ENCODE measurements at regions of chr11 and their contacts with region 1.

Region 1: GRCh38 chr11:8964324-8965320 is at the start of gene TMEM9B:
- DNase-seq: peak; percentile 84
- ATAC-seq: peak; percentile 82
- H3K4me3 Mint-ChIP-seq: peak within 1 kb of the TSS; percentile 96
- H3K27ac Mint-ChIP-seq: peak within 1 kb of the TSS; percentile 92
- H3K4me1 Mint-ChIP-seq: peaks cover 35% of the 10 kb centered on the region
- H3K27me3 Mint-ChIP-seq: no peaks in the 10 kb centered on the region
- CTCF ChIP-seq: no peak
- total RNA-seq, gene TMEM9B: 29.0 and 29.6 TPM in 2 replicates

Region 2: DNA sequence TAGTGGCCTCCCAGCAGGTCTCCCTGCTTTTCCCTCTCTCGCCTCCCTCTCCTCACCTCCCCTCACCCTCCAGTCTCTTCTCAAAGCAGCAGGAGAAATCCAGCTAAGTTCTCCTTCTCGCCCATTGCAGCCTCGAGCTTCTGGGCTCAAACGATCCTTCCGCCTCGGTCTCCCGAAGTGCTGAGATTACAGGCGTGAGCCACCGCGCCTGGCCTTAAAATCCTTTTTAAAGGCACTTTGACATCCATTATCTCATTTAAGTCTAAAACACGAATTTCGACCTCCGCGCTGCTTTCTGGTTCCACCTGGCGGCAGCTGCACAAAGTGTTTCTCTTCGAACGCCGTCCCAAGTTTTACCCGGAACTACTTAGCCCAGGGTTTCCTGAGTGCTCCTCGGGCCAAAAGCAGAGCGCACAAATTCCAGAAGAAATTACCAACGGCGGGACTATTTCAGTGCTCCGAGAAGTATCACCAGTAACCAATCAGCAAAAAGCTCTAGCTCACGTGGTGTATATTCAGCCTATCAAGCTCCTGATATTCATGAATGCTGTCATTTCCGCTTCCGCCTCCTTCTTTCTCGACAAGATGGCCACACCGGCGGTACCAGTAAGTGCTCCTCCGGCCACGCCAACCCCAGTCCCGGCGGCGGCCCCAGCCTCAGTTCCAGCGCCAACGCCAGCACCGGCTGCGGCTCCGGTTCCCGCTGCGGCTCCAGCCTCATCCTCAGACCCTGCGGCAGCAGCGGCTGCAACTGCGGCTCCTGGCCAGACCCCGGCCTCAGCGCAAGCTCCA is 977.7 kb before region 1 on chr11 and contains the start of gene EIF3F:
- CTCF ChIA-PET with region 1: no interaction called
- POLR2A ChIA-PET with region 1: no interaction called
- intact Hi-C with region 1: loop called (anchors 1 kb)
- DNase-seq: peak; percentile 73
- ATAC-seq: peak; percentile 97
- H3K4me3 Mint-ChIP-seq: peak within 1 kb of the TSS; percentile 93
- H3K27ac Mint-ChIP-seq: peak within 1 kb of the TSS; percentile 94
- H3K4me1 Mint-ChIP-seq: peaks cover 40% of the 10 kb centered on the region
- H3K27me3 Mint-ChIP-seq: no peaks in the 10 kb centered on the region
- CTCF ChIP-seq: peak; percentile 56
- total RNA-seq, gene EIF3F: 367 and 396 TPM in 2 replicates

Region 3: DNA sequence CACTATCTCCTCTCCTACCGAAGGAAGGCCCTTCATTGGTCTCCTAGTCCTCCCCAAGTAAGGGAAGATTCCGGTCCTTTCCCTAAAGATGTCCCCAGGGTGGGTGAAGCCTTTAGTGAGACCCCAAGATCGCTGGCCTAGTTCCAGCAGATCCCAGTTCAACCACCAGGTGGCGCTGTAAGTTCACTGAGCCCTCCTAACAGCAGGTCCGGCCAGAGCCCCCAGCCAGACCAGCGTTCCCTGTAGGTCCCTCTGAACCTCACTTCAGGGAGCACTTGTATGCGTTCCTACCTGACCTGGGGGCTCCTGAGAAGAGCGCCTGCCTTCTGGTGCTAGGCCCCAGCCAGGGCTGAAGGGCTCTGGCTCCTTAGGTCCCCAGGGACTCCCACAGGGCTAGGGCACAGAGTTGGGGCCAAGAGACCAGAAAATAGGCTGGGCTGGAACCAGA is 739.0 kb before region 1 on chr11:
- CTCF ChIA-PET with region 1: interaction called, 3 read pairs
- POLR2A ChIA-PET with region 1: no interaction called
- intact Hi-C with region 1: loop called (anchors 1 kb)
- DNase-seq: peak; percentile 67
- ATAC-seq: peak; percentile 79
- H3K4me3 Mint-ChIP-seq: no peak overlapping the region
- H3K27ac Mint-ChIP-seq: no peak overlapping the region
- H3K4me1 Mint-ChIP-seq: no peaks in the 10 kb centered on the region
- H3K27me3 Mint-ChIP-seq: peaks cover 3% of the 10 kb centered on the region
- CTCF ChIP-seq: no peak

Region 4: GRCh38 chr11:8566613-8567210 is 397.9 kb before region 1 on chr11:
- CTCF ChIA-PET with region 1: interaction called, 11 read pairs
- POLR2A ChIA-PET with region 1: interaction called, 3 read pairs
- intact Hi-C with region 1: no loop called
- DNase-seq: no peak
- ATAC-seq: peak; percentile 45
- H3K4me3 Mint-ChIP-seq: no peak overlapping the region
- H3K27ac Mint-ChIP-seq: no peak overlapping the region
- H3K4me1 Mint-ChIP-seq: no peaks in the 10 kb centered on the region
- H3K27me3 Mint-ChIP-seq: peaks cover 1% of the 10 kb centered on the region
- CTCF ChIP-seq: no peak

Region 5: DNA sequence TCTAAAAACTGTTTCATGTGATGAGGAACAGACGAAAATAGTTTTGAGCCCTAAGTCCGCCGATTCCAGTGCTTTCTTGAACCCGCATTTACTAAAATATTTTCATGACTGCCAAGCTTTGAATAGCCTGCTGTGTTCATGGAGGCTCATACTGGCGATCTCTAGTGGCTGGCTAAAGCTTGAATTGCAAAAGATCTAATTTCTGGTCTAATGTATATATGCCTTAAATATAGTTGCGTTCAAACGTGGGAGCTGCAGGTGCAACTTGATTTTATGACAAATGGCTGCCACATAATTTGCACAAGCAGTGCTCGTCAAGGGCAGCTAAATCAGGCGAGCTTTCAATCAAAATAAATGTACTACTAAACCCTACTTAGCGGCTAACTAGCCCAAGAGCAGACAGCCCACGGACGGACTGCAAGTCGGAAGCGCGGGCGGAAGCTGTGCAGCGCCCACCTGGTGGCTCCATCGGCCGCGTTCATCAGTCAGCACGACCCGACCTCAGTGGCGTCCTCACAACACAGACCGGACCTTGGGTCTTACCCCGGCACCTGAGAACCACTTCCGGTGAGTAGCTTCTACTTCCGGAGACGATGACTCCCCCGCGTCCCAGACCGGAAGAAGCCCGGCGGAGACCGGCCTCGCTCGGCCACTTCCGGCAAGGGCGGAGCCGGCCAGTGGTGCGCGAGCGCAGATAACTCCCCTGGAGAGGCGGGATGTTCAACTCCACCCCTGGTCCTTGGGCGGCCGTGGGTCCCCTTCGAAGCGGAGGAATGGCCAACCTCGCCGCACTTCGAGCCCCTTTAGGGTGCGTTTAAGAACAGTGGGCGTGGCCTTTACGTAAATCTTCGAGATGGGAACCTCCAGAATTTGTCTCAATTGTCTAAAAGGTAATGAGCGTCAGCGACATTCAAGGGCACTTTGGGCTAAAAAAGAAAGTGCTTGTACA is 275.9 kb before region 1 on chr11:
- CTCF ChIA-PET with region 1: interaction called, 6 read pairs
- POLR2A ChIA-PET with region 1: interaction called, 20 read pairs
- intact Hi-C with region 1: no loop called
- DNase-seq: peak; percentile 84
- ATAC-seq: peak; percentile 90
- H3K4me3 Mint-ChIP-seq: peak overlapping the region; percentile 97
- H3K27ac Mint-ChIP-seq: peak overlapping the region; percentile 95
- H3K4me1 Mint-ChIP-seq: peaks cover 49% of the 10 kb centered on the region
- H3K27me3 Mint-ChIP-seq: no peaks in the 10 kb centered on the region
- CTCF ChIP-seq: no peak

Region 6: GRCh38 chr11:8911029-8911826 is 53.4 kb before region 1 on chr11 and contains the start of gene AKIP1:
- CTCF ChIA-PET with region 1: interaction called, 25 read pairs
- POLR2A ChIA-PET with region 1: interaction called, 18 read pairs
- intact Hi-C with region 1: loop called (anchors 1 kb)
- DNase-seq: peak; percentile 70
- ATAC-seq: peak; percentile 77
- H3K4me3 Mint-ChIP-seq: peak within 1 kb of the TSS; percentile 89
- H3K27ac Mint-ChIP-seq: peak within 1 kb of the TSS; percentile 59
- H3K4me1 Mint-ChIP-seq: peaks cover 37% of the 10 kb centered on the region
- H3K27me3 Mint-ChIP-seq: no peaks in the 10 kb centered on the region
- CTCF ChIP-seq: no peak
- total RNA-seq, gene AKIP1: 7.1 and 9.0 TPM in 2 replicates

Region 7: GRCh38 chr11:9039194-9039593 is 74.6 kb after region 1 on chr11:
- CTCF ChIA-PET with region 1: no interaction called
- POLR2A ChIA-PET with region 1: no interaction called
- intact Hi-C with region 1: no loop called
- DNase-seq: no peak
- ATAC-seq: no peak
- H3K4me3 Mint-ChIP-seq: no peak overlapping the region
- H3K27ac Mint-ChIP-seq: no peak overlapping the region
- H3K4me1 Mint-ChIP-seq: no peaks in the 10 kb centered on the region
- H3K27me3 Mint-ChIP-seq: peaks cover 2% of the 10 kb centered on the region
- CTCF ChIP-seq: no peak

Region 8: DNA sequence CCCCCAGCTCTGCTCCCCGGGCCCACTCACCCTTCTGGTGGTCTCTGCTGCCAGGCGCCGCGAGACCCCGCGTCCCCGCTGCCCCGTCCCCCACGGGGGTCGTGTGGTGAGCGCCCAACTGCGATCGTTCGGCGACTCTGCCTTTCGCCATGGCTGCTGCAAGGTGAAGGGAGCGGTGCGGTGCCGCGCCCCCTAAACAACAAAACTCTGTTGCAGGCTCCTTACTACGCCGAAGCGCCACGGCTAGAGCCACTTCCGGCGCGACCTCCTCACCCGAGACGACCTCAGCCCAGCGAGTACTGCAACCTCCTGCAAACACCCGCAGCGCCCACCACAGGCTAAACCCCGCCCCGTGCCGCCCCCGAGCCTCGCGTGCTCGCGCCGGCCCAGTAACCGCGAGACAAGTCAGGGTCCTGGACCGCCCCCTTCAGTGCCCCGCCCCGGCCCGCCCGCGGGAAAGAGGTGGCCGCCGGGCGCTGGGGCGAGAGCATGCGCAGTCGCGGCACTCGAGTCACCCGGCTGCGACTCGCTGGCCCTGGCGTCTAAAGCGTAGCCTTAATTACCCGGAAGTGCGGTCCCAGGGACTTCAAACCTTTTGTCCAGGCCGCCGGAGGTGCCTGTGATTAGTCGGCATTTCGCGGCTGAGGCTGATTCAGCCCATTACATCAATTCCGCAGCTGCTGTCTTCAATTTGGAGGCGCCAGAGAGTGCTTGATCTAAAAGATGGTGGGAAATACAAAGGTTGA is 349.8 kb after region 1 on chr11 and contains the start of gene TMEM41B:
- CTCF ChIA-PET with region 1: no interaction called
- POLR2A ChIA-PET with region 1: no interaction called
- intact Hi-C with region 1: loop called (anchors 1 kb)
- DNase-seq: peak; percentile 100
- ATAC-seq: peak; percentile 96
- H3K4me3 Mint-ChIP-seq: peak within 1 kb of the TSS; percentile 98
- H3K27ac Mint-ChIP-seq: peak within 1 kb of the TSS; percentile 95
- H3K4me1 Mint-ChIP-seq: peaks cover 49% of the 10 kb centered on the region
- H3K27me3 Mint-ChIP-seq: peaks cover 4% of the 10 kb centered on the region
- CTCF ChIP-seq: no peak
- total RNA-seq, gene TMEM41B: 19.4 and 21.7 TPM in 2 replicates